ENCODE measurements at regions of chr17 and their contacts with region 1.

Region 1: DNA sequence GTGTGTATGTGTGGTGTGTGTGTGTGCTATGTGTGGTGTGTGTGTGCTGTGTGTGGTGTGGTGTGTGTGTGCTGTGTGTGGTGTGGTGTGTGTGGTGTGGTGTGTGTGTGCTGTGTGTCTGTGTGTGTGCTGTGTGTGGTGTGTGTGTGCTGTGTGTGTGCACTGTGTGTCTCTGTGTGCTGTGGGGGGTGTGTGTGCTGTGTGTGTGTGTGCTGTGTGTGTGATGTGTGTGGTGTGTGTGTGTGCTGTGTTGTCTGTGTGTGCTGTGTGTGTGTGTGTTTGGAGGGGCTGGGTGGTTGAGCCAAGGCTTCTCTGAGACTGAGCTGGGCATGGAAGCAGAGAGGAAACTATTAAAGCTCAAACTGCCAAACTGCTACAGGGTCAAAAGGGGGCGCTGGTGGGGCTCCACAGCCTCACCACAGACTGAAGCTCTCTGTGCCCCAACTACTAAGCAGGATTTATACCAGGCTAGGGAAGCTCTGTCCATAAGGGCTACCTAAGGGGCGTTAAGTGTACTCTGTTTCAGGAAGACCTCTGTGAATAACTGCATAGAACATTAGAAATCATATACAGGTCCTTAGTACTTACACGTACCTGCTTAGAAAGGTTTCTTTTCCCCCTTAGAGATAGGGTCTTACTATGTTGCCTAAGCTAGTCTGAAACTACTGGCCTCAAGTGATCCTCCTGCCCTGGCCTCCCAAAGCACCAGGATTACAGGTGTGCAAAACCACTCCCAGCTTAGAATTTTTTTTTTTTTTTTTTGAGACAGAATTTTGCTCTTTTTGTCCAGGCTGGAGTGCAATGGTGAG is 27.8 kb upstream of the GHDC start:
- DNase-seq: peak; percentile 79
- ATAC-seq: peak; percentile 98
- H3K4me3 Mint-ChIP-seq: no peak overlapping the region
- H3K27ac Mint-ChIP-seq: peak overlapping the region; percentile 79
- H3K4me1 Mint-ChIP-seq: peaks cover 6% of the 10 kb centered on the region
- H3K27me3 Mint-ChIP-seq: no peaks in the 10 kb centered on the region

Region 2: GRCh38 chr17:42153919-42154742 is 68.0 kb before region 1 on chr17:
- CTCF ChIA-PET with region 1: no interaction called
- POLR2A ChIA-PET with region 1: no interaction called
- intact Hi-C with region 1: no loop called
- DNase-seq: no peak
- ATAC-seq: no peak
- H3K4me3 Mint-ChIP-seq: peak overlapping the region; percentile 97
- H3K27ac Mint-ChIP-seq: peak overlapping the region; percentile 93
- H3K4me1 Mint-ChIP-seq: peaks cover 31% of the 10 kb centered on the region
- H3K27me3 Mint-ChIP-seq: no peaks in the 10 kb centered on the region

Region 3: GRCh38 chr17:42210046-42210445 is 12.1 kb before region 1 on chr17:
- CTCF ChIA-PET with region 1: interaction called, 10 read pairs
- POLR2A ChIA-PET with region 1: interaction called, 3 read pairs
- intact Hi-C with region 1: no loop called
- DNase-seq: no peak
- ATAC-seq: no peak
- H3K4me3 Mint-ChIP-seq: no peak overlapping the region
- H3K27ac Mint-ChIP-seq: no peak overlapping the region
- H3K4me1 Mint-ChIP-seq: no peaks in the 10 kb centered on the region
- H3K27me3 Mint-ChIP-seq: no peaks in the 10 kb centered on the region

Region 4: DNA sequence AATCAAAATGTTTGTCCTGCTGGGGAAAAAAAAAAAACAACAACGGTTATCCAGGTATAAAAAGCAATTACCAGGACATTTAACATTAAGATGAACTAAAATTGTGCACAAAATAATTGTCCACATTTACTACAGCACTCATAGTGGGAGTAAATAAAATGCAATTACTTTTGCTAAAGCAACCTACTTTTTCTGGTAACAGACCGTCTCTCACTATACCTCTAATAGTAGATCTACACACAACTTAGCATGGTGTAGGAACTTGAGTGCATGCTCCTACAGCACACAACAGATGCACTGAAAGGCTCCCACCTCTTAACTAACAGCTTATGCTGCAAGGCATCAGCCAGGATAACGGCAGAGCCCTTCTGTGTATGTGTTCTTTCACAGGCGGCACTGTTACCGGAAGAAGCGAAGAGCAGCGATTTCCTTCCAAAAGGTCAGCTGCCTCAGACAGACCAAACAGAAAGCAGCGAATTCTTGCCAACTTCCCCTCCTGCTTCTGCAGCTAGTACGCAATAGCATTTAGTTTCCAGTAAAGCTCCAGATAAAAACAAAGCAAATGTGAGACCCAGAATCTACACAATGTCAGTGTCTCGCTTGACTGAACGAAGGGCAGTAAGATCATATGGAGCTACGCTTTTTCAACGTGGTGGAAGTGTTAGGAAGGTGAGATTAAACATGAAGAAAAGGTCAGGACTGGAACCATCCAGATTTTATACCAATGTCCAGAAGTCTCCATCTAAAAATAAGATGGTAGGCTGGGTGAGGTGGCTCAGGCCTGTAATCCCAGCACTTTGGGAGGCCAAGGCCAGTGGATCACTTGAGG is 26.4 kb after region 1 on chr17:
- CTCF ChIA-PET with region 1: interaction called, 29 read pairs
- POLR2A ChIA-PET with region 1: interaction called, 10 read pairs
- intact Hi-C with region 1: no loop called
- DNase-seq: peak; percentile 87
- ATAC-seq: peak; percentile 81
- H3K4me3 Mint-ChIP-seq: peak overlapping the region; percentile 79
- H3K27ac Mint-ChIP-seq: peak overlapping the region; percentile 100
- H3K4me1 Mint-ChIP-seq: peaks cover 71% of the 10 kb centered on the region
- H3K27me3 Mint-ChIP-seq: no peaks in the 10 kb centered on the region

Region 5: GRCh38 chr17:42276359-42276608 is 54.1 kb after region 1 on chr17 and contains the start of gene STAT5B:
- CTCF ChIA-PET with region 1: interaction called, 20 read pairs
- POLR2A ChIA-PET with region 1: interaction called, 4 read pairs
- intact Hi-C with region 1: loop called (anchors 1 to 2 kb)
- DNase-seq: peak; percentile 80
- ATAC-seq: peak; percentile 51
- H3K4me3 Mint-ChIP-seq: peak within 1 kb of the TSS; percentile 94
- H3K27ac Mint-ChIP-seq: peak within 1 kb of the TSS; percentile 97
- H3K4me1 Mint-ChIP-seq: peaks cover 37% of the 10 kb centered on the region
- H3K27me3 Mint-ChIP-seq: no peaks in the 10 kb centered on the region
- total RNA-seq, gene STAT5B: 162 to 203 TPM

Region 6: GRCh38 chr17:42312285-42313130 is 90.4 kb after region 1 on chr17:
- CTCF ChIA-PET with region 1: interaction called, 44 read pairs
- POLR2A ChIA-PET with region 1: interaction called, 6 read pairs
- intact Hi-C with region 1: loop called in 1 of 2 experiments (anchors 5 kb)
- DNase-seq: peak; percentile 94
- ATAC-seq: peak; percentile 69
- H3K4me3 Mint-ChIP-seq: peak overlapping the region; percentile 66
- H3K27ac Mint-ChIP-seq: peak overlapping the region; percentile 96
- H3K4me1 Mint-ChIP-seq: peaks cover 90% of the 10 kb centered on the region
- H3K27me3 Mint-ChIP-seq: no peaks in the 10 kb centered on the region

Region 7: DNA sequence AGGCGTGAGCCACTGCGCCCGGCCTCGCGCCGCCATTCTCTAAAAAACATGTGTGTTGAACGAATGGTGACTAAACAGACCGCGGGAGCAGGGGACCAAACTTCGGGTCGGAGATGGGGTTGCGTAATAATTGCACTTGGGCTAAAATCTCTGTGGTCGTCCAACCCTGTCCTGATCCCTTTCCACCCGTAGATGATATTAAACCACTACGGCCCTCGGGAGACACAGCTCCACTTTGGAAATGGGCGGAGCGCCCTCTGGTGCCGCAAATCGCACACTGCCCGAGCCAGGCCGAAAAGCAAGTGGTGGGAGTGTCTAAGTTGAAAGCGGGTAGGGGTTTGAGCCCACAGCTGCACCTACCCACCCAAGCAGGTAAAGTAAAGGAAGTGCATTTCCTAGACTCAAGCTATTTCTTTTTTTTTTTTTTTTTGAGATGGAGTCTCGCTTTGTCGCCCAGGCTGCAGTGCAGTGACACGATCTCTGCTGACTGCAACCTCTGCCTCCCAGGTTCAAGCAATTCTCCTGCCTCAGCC is 183.9 kb after region 1 on chr17:
- CTCF ChIA-PET with region 1: interaction called, 43 read pairs
- POLR2A ChIA-PET with region 1: interaction called, 3 read pairs
- intact Hi-C with region 1: loop called (anchors 1 kb)
- DNase-seq: peak; percentile 91
- ATAC-seq: peak; percentile 69
- H3K4me3 Mint-ChIP-seq: no peak overlapping the region
- H3K27ac Mint-ChIP-seq: no peak overlapping the region
- H3K4me1 Mint-ChIP-seq: peaks cover 19% of the 10 kb centered on the region
- H3K27me3 Mint-ChIP-seq: no peaks in the 10 kb centered on the region